ENCODE measurements at regions of chr20 and their contacts with region 1.

Region 1: DNA sequence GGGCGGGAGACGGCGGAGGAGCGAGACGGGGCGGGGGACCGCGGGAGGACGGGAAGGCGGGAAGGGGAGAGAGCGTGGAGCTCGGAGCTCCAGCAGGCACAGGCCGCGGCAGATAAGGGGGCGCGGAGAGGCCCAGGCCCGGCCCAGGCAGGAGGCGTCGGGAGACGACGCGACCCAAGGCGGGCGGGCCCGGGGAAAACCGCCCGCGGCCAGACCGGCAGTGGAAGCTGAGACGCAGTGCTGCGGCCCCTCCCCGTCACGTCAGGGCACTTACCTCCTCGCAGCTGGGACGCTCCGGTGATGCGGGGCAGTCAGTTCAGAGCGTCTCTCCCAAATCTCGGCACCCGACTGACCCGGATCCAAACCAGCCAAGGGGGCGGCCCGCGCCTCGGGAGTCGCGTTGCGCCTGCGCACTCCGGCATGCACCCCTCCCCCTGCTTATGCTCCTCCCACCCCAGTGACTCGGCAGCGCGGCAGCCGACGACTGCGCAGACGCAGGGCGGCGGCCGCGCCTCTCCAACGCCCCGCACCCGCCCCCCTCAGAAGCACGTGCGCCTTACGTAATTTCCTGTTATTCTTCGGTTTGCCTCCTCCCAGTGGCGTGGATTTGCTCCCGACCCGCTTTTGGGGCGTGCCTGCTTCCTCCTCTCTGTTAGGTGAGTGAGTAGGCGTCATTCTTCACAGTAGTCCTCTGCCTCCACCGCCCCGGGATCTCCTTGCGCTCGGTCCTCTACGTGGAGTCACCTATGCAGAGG is at the start of gene OSER1:
- DNase-seq: peak; percentile 100
- H3K4me3 Mint-ChIP-seq: peak within 1 kb of the TSS; percentile 94
- H3K27ac Mint-ChIP-seq: peak within 1 kb of the TSS; percentile 91
- H3K4me1 Mint-ChIP-seq: peaks cover 52% of the 10 kb centered on the region
- H3K27me3 Mint-ChIP-seq: peaks cover 2% of the 10 kb centered on the region
- total RNA-seq, gene OSER1: 22.7 and 23.6 TPM in 2 replicates

Region 2: GRCh38 chr20:44198872-44199271 is 11.7 kb before region 1 on chr20:
- intact Hi-C with region 1: loop called (anchors 1 kb)
- DNase-seq: peak; percentile 86
- H3K4me3 Mint-ChIP-seq: peak overlapping the region; percentile 45
- H3K27ac Mint-ChIP-seq: peak overlapping the region; percentile 8
- H3K4me1 Mint-ChIP-seq: peaks cover 17% of the 10 kb centered on the region
- H3K27me3 Mint-ChIP-seq: no peaks in the 10 kb centered on the region

Region 3: GRCh38 chr20:44475694-44476560 is 265.3 kb after region 1 on chr20 and contains the start of gene TTPAL:
- intact Hi-C with region 1: loop called (anchors 2 kb)
- DNase-seq: peak; percentile 98
- H3K4me3 Mint-ChIP-seq: peak within 1 kb of the TSS; percentile 99
- H3K27ac Mint-ChIP-seq: peak within 1 kb of the TSS; percentile 99
- H3K4me1 Mint-ChIP-seq: peaks cover 12% of the 10 kb centered on the region
- H3K27me3 Mint-ChIP-seq: no peaks in the 10 kb centered on the region
- total RNA-seq, gene TTPAL: 22.6 and 23.2 TPM in 2 replicates

Region 4: DNA sequence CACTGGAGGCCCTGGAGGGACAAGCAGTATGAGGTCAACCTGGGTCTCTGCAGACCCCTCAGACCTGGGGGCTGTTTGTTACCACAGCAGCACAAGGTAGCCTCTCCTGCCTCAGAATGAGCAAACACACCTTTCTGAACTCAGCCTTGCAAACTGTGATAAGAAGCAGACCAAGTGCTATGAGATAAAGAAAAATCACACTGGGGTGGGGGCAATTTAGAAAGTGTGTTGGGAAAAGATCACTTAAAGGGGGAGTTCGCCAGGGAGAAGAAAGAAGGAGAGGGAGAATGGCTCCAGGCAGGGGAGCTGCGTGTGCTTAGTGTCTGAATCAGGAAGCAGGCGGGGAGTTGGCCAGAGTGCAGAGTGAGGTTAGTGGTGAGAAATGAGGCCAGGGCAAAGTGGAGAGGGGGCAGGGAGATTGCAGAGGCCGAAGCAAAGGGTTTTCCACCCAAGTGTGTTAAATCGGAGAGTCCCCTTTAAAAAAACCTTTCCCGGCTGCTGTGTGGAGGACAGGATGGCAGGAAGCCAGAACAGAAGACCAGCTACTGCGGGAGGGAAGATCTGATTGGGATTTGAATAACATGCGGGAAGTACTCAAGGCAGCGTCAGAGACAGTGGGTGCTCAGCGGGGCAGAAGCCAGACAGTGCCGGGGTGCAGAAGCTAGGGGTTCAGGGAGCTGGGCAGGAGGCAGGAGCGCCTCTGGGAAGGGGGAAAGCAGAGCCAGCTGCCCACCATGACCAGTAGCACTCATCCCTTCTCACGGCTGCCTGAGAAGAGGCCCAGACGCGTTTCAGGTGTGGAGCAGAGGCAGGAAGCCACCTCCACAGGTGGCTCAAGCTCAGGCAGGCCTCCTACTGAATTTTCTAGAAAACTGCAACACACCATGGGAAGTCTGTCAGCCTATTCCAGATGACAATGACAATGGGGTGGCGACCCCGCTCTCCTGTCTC is 431.9 kb after region 1 on chr20:
- intact Hi-C with region 1: loop called (anchors 10 kb)
- DNase-seq: peak; percentile 77
- H3K4me3 Mint-ChIP-seq: peak overlapping the region; percentile 69
- H3K27ac Mint-ChIP-seq: peak overlapping the region; percentile 92
- H3K4me1 Mint-ChIP-seq: peaks cover 59% of the 10 kb centered on the region
- H3K27me3 Mint-ChIP-seq: no peaks in the 10 kb centered on the region

Measured in activated CD4-positive, alpha-beta T cell treated with anti-CD3 and anti-CD28 coated beads, Interleukin-2, amount 10 ng/mL, durations not matched to agents 24 days and 14 days (primary cell).